Mammary epithelial cell (primary cell): ENCODE measurements at regions of chr6 and their contacts with region 1.

Region 1: GRCh38 chr6:110682460-110682853 is 132.8 kb downstream of the CDK19 start:
- DNase-seq: peak; percentile 68
- H3K4me3 ChIP-seq: no peak overlapping the region
- H3K27ac ChIP-seq: no peak overlapping the region
- H3K4me1 ChIP-seq: peaks cover 3% of the 10 kb centered on the region
- H3K27me3 ChIP-seq: no peaks in the 10 kb centered on the region
- CTCF ChIP-seq: peak; percentile 50 to 75

Region 2: DNA sequence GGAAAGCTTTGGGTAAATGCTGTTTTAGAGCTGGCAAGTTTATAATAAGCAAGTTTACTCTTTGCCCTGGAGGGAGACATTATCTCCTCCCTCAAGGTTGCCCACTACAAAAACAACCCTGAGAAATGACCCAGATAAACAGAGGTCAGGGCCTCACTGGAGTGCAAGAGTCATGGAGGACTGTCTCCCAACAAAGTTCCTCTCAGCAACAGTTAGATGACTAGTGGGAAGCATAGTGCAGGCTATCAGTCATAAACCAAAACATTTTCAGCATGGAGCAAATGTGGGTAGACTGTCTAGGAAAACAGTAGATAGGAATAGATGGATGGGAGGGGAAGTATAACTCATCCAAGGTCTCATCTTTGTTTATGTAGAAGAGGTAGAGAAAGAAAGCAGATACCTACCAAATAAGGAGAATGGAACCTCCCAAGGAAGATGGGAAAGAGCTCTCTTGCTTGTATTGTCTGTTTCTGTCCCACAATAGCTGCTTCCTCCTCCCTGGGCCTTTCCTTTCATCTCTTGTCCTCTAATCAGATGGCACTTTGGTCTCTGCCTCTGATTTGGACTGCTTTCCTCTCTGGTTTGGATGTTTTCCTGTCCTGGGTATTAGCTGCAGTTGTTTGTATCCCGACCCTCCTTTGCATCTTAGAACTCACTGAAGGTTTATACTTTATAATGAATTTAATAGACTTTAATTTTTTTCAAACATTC is 598.4 kb before region 1 on chr6:
- CTCF ChIA-PET with region 1: no interaction called
- dilution Hi-C with region 1: no loop called
- in situ Hi-C with region 1: no loop called
- intact Hi-C with region 1: no loop called
- DNase-seq: no peak
- H3K4me3 ChIP-seq: no peak overlapping the region
- H3K27ac ChIP-seq: no peak overlapping the region
- H3K4me1 ChIP-seq: no peaks in the 10 kb centered on the region
- H3K27me3 ChIP-seq: no peaks in the 10 kb centered on the region
- CTCF ChIP-seq: no peak

Region 3: DNA sequence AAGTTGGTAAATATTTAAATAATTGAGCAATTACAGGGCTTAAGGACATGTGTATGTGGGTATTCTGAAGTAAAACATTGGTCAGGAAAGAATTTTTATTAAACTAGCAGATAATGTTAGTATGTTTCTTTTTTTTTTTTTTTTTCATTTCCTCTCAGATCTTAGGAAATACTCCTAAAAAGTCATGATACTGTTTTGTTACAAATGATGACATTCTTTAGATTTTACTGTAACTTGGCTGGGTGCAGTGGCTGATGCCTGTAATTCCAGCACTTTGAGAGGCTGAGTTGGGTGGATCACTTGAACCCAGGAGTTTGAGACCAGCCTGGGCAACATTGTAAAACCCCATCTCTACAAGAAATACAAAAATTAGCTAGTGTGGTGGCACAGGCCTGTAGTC is 460.7 kb before region 1 on chr6:
- CTCF ChIA-PET with region 1: no interaction called
- dilution Hi-C with region 1: no loop called
- in situ Hi-C with region 1: no loop called
- intact Hi-C with region 1: no loop called
- DNase-seq: no peak
- H3K4me3 ChIP-seq: no peak overlapping the region
- H3K27ac ChIP-seq: no peak overlapping the region
- H3K4me1 ChIP-seq: peaks cover 13% of the 10 kb centered on the region
- H3K27me3 ChIP-seq: no peaks in the 10 kb centered on the region
- CTCF ChIP-seq: no peak

Region 4: DNA sequence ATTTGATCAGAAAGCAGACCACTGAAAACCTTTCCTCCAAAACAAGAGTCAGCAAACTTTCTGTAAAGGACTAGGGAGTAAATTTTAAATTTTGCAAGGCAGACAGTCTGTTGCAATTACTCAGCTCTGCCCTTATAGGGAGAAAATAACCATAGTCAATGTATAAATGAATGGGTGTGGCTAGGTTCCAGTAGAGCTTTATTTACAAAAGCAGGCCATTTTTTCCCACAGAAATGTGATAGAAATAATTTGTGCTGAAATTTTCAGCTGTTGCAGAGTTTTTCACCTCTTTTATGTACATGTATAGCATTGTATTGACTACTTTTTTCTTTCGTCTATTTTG is 199.8 kb after region 1 on chr6:
- CTCF ChIA-PET with region 1: no interaction called
- dilution Hi-C with region 1: no loop called
- in situ Hi-C with region 1: loop called (anchors 10 to 25 kb)
- intact Hi-C with region 1: no loop called
- DNase-seq: no peak
- H3K4me3 ChIP-seq: no peak overlapping the region
- H3K27ac ChIP-seq: no peak overlapping the region
- H3K4me1 ChIP-seq: peaks cover 26% of the 10 kb centered on the region
- H3K27me3 ChIP-seq: no peaks in the 10 kb centered on the region
- CTCF ChIP-seq: no peak

Region 5: DNA sequence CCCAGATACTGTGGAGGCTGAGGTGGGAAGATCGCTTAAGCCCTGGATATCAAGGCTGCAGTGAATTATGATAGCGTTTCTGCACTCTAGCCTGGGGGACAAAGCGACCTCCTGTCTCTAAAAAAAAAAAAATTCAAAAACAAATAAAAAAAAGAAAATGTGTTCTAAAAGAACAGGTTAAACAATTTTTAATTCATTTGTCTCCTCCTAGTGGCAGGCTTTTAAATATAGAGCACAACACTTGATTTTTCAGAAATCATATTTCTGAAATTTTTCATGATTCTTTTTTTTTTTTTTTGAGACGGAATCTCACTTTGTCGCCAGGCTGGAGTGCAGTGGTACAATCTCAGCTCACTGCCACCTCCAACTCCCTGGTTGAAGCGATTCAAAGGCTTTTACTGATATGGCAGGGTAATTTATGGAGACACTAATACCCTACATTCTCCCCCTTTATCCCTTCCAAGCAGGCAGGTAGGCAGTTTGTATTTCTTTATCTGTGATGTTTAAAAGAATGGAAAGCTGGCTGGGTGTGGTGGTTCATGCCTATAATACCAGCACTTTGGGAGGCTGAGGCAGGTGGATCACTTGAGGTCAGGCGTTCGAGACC is 267.3 kb after region 1 on chr6:
- CTCF ChIA-PET with region 1: interaction called, 3 read pairs
- dilution Hi-C with region 1: no loop called
- in situ Hi-C with region 1: loop called in 1 of 2 experiments (anchors 5 kb)
- intact Hi-C with region 1: loop called (anchors 1 kb)
- DNase-seq: no peak
- H3K4me3 ChIP-seq: no peak overlapping the region
- H3K27ac ChIP-seq: no peak overlapping the region
- H3K4me1 ChIP-seq: peaks cover 22% of the 10 kb centered on the region
- H3K27me3 ChIP-seq: no peaks in the 10 kb centered on the region
- CTCF ChIP-seq: peak; percentile 37 to 51

Region 6: DNA sequence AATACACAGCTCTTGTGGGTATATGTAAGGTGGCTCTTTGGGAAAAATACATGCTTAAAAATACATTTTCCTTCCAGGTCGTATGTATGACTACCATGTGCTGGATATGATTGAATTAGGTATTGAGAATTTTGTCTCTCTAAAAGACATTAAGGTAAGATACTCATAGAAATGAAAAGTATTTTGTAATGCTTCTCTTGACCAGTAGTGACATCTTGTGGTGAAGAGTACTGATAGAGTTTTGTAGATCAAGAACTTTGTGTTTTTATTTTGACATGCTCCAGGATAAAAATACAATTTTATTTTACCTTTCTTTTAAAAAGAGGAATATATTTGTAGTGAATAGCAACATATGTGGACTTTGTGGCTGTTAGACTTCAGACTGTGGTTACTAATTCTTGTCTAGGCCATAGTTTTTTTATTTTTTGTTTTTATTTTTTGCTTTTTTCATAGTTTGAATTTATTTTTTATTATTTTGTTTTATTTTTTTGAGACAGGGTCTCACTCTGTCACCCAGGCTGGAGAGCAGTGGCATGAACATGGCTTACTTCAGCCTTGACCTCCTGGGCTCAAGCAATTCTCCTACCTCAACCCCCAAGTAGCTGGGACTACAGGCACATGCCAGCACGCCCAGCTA is 317.3 kb after region 1 on chr6:
- CTCF ChIA-PET with region 1: interaction called, 6 read pairs
- dilution Hi-C with region 1: no loop called
- in situ Hi-C with region 1: no loop called
- intact Hi-C with region 1: loop called (anchors 1 kb)
- DNase-seq: peak; percentile 16
- H3K4me3 ChIP-seq: no peak overlapping the region
- H3K27ac ChIP-seq: no peak overlapping the region
- H3K4me1 ChIP-seq: no peaks in the 10 kb centered on the region
- H3K27me3 ChIP-seq: no peaks in the 10 kb centered on the region
- CTCF ChIP-seq: peak; percentile 21 to 48

Region 7: DNA sequence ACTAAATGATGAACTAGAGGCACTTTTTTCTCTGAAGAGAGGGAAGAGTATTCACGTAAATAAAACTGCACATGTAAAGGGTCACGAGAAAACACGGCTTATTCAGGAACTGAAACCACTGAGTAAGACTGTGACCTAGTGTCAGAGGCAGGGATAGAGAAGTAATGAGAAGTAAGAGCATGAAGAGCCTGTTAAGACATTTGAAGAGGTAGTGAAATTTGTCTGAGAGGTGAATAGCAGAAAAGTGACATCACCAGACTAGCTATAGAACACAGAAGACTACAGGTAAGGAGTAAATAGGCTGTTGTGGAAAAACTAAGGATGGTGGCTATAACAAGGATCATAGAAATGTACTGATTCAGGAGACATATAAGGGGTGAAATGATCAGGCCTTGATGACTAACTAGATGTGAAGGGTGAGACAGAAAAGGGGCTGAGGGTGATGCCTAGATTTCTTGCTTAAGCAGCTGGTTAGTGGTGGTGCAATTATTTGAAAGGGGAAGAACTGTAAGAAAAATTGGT is 723.8 kb after region 1 on chr6:
- CTCF ChIA-PET with region 1: no interaction called
- dilution Hi-C with region 1: no loop called
- in situ Hi-C with region 1: no loop called
- intact Hi-C with region 1: no loop called
- DNase-seq: no peak
- H3K4me3 ChIP-seq: no peak overlapping the region
- H3K27ac ChIP-seq: no peak overlapping the region
- H3K4me1 ChIP-seq: no peaks in the 10 kb centered on the region
- H3K27me3 ChIP-seq: no peaks in the 10 kb centered on the region
- CTCF ChIP-seq: no peak